G401 (cell line): ENCODE measurements at regions of chr5 and their contacts with region 1.

Region 1: DNA sequence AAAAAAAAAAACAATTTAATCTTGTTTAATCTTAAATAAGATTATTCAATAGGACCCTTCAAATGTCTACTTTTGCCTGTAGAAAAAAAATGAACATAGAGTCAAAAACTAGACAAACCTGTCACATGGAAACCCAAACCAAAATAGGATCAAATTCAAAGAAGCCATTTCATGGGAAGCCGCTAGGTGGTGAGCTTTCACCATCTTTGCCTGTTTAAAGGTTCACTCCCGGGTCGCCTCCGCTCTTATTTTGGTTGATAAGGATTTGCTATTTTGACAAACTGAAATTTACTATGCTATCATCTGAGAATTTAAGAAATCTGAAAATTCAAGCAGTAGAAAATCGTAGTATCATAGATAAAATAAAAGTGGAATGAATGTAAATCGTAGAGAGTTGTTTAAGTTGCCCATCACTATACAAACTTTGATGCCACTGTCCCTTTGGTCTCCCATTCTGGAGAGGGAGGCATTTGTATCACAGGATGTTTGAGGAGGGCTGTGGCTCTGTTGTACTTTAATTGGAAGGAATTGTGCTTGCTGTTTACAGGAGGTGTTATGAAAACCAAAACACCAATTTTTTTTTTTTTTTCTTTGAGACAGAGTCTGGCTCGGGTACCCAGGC is 43.5 kb upstream of the DNAH5 start:
- DNase-seq: peak; percentile 76

Region 2: GRCh38 chr5:14081791-14082190 is 93.8 kb after region 1 on chr5:
- in situ Hi-C with region 1: no loop called
- DNase-seq: no peak

Region 3: DNA sequence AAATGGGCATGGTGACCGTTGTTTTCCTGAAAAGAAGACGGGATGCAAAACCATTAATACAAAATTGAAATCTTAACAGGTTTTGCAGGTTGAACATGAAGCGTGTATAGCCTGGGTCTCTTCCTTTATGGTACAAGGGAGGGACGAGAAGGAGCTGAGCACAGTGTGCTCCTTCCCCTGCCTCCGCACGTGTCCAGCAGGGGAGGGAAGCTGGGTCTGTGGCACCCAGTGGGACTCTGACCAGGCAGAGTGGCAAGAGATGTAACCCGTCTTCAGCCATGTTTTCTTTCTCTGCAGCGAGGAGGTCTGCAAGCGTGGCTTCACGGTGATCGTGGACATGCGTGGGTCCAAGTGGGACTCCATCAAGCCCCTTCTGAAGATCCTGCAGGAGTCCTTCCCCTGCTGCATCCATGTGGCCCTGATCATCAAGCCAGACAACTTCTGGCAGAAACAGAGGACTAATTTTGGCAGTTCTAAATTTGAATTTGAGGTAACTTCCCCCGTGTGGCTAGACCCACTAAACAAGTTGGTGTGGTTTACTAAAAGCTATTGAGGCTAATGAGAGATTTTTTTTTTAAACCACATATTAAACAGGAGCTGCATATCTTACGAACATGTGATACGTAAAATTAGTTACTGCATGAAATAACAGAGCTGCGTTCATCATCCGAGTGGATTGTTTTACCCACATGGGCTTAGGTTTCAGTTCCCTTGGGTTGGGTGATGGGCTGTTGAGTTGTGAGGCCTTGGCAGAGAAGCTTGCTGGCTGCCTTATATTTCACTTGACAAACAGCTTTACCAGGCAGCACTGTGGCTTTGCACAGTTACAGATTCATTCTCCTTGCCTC is 298.8 kb after region 1 on chr5:
- in situ Hi-C with region 1: loop called (anchors 25 kb)
- DNase-seq: no peak

Region 4: GRCh38 chr5:14351845-14352712 is 364.1 kb after region 1 on chr5:
- in situ Hi-C with region 1: loop called (anchors 25 kb)
- DNase-seq: peak; percentile 87